CD8-positive, alpha-beta T cell (primary cell): ENCODE measurements at regions of chr5 and their contacts with region 1.

Region 1: GRCh38 chr5:81301271-81302015 is at the start of gene ZCCHC9:
- DNase-seq: peak; percentile 85 to 98 (median 94)
- ATAC-seq: peak; percentile 87
- H3K4me3 ChIP-seq: peak within 1 kb of the TSS; percentile 75 to 91
- H3K4me3 Mint-ChIP-seq: peak within 1 kb of the TSS; percentile 93
- H3K27ac ChIP-seq: peak within 1 kb of the TSS; percentile 79 to 87
- H3K27ac Mint-ChIP-seq: peak within 1 kb of the TSS; percentile 97
- H3K4me1 ChIP-seq: peaks cover 31% of the 10 kb centered on the region
- H3K4me1 Mint-ChIP-seq: peaks cover 60% of the 10 kb centered on the region
- H3K27me3 ChIP-seq: no peaks in the 10 kb centered on the region
- H3K27me3 Mint-ChIP-seq: no peaks in the 10 kb centered on the region
- CTCF ChIP-seq: no peak
- total RNA-seq, gene ZCCHC9: 14.6 to 15.3 TPM

Region 2: GRCh38 chr5:79612667-79613198 is 1688.7 kb before region 1 on chr5:
- CTCF ChIA-PET with region 1: no interaction called
- POLR2A ChIA-PET with region 1: no interaction called
- intact Hi-C with region 1: loop called in 1 of 2 experiments (anchors 5 kb)
- DNase-seq: no peak
- ATAC-seq: no peak
- H3K4me3 ChIP-seq: peak overlapping the region; percentile 71 to 97
- H3K4me3 Mint-ChIP-seq: peak overlapping the region; percentile 96
- H3K27ac ChIP-seq: peak overlapping the region; percentile 89 to 91
- H3K27ac Mint-ChIP-seq: peak overlapping the region; percentile 98
- H3K4me1 ChIP-seq: peaks cover 26% of the 10 kb centered on the region
- H3K4me1 Mint-ChIP-seq: peaks cover 39% of the 10 kb centered on the region
- H3K27me3 ChIP-seq: no peaks in the 10 kb centered on the region
- H3K27me3 Mint-ChIP-seq: peaks cover 9% of the 10 kb centered on the region
- CTCF ChIP-seq: no peak

Region 3: GRCh38 chr5:80679650-80680049 is 621.8 kb before region 1 on chr5:
- CTCF ChIA-PET with region 1: no interaction called
- POLR2A ChIA-PET with region 1: no interaction called
- intact Hi-C with region 1: loop called in 1 of 2 experiments (anchors 5 kb)
- DNase-seq: no peak
- ATAC-seq: no peak
- H3K4me3 ChIP-seq: no peak overlapping the region
- H3K4me3 Mint-ChIP-seq: no peak overlapping the region
- H3K27ac ChIP-seq: no peak overlapping the region
- H3K27ac Mint-ChIP-seq: no peak overlapping the region
- H3K4me1 ChIP-seq: no peaks in the 10 kb centered on the region
- H3K4me1 Mint-ChIP-seq: peaks cover 2% of the 10 kb centered on the region
- H3K27me3 ChIP-seq: no peaks in the 10 kb centered on the region
- H3K27me3 Mint-ChIP-seq: no peaks in the 10 kb centered on the region
- CTCF ChIP-seq: no peak

Region 4: GRCh38 chr5:81288021-81288433 is 13.4 kb before region 1 on chr5:
- CTCF ChIA-PET with region 1: interaction called, 11 read pairs
- POLR2A ChIA-PET with region 1: interaction called, 6 read pairs
- intact Hi-C with region 1: no loop called
- DNase-seq: no peak
- ATAC-seq: no peak
- H3K4me3 ChIP-seq: no peak overlapping the region
- H3K4me3 Mint-ChIP-seq: no peak overlapping the region
- H3K27ac ChIP-seq: no peak overlapping the region
- H3K27ac Mint-ChIP-seq: no peak overlapping the region
- H3K4me1 ChIP-seq: peaks cover 7% of the 10 kb centered on the region
- H3K4me1 Mint-ChIP-seq: peaks cover 57% of the 10 kb centered on the region
- H3K27me3 ChIP-seq: no peaks in the 10 kb centered on the region
- H3K27me3 Mint-ChIP-seq: no peaks in the 10 kb centered on the region
- CTCF ChIP-seq: no peak

Region 5: DNA sequence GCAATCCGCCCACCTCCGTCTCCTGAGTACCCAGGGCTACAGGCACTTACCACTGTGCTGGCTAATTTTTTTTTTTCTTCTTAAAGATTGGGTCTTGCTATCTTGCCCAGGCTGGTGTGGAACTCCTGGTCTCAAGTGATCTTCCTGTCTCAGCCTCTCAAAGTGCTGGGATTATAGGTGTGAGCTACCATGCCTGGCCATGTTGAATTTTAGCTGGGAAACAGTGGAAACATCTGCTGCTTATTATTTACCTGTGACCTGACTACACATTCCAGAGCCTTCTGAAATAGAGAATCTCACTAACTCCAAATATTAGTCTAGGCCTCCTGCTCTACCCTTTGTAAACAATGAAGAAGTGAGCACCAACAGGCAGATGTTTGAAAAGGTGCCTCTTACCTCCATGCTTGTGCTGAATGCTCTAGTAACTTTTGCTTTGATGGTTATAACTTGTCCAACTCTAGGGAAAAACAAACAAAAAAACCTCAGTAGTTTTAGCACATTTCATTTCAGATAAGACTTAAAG is 70.0 kb after region 1 on chr5:
- CTCF ChIA-PET with region 1: no interaction called
- POLR2A ChIA-PET with region 1: no interaction called
- intact Hi-C with region 1: no loop called
- DNase-seq: no peak
- ATAC-seq: no peak
- H3K4me3 ChIP-seq: no peak overlapping the region
- H3K4me3 Mint-ChIP-seq: no peak overlapping the region
- H3K27ac ChIP-seq: no peak overlapping the region
- H3K27ac Mint-ChIP-seq: no peak overlapping the region
- H3K4me1 ChIP-seq: no peaks in the 10 kb centered on the region
- H3K4me1 Mint-ChIP-seq: no peaks in the 10 kb centered on the region
- H3K27me3 ChIP-seq: no peaks in the 10 kb centered on the region
- H3K27me3 Mint-ChIP-seq: peaks cover 10% of the 10 kb centered on the region
- CTCF ChIP-seq: no peak

Region 6: GRCh38 chr5:81971712-81972495 is 670.5 kb after region 1 on chr5 and contains the start of gene ATG10:
- CTCF ChIA-PET with region 1: no interaction called
- POLR2A ChIA-PET with region 1: no interaction called
- intact Hi-C with region 1: loop called in 1 of 2 experiments (anchors 5 kb)
- DNase-seq: peak; percentile 75 to 95 (median 86)
- ATAC-seq: peak; percentile 85
- H3K4me3 ChIP-seq: peak within 1 kb of the TSS; percentile 85 to 99
- H3K4me3 Mint-ChIP-seq: peak within 1 kb of the TSS; percentile 100
- H3K27ac ChIP-seq: peak within 1 kb of the TSS; percentile 96 to 97
- H3K27ac Mint-ChIP-seq: peak within 1 kb of the TSS; percentile 100
- H3K4me1 ChIP-seq: peaks cover 12% of the 10 kb centered on the region
- H3K4me1 Mint-ChIP-seq: peaks cover 31% of the 10 kb centered on the region
- H3K27me3 ChIP-seq: no peaks in the 10 kb centered on the region
- H3K27me3 Mint-ChIP-seq: no peaks in the 10 kb centered on the region
- CTCF ChIP-seq: no peak
- total RNA-seq, gene ATG10: 4.7 to 5.7 TPM

Region 7: DNA sequence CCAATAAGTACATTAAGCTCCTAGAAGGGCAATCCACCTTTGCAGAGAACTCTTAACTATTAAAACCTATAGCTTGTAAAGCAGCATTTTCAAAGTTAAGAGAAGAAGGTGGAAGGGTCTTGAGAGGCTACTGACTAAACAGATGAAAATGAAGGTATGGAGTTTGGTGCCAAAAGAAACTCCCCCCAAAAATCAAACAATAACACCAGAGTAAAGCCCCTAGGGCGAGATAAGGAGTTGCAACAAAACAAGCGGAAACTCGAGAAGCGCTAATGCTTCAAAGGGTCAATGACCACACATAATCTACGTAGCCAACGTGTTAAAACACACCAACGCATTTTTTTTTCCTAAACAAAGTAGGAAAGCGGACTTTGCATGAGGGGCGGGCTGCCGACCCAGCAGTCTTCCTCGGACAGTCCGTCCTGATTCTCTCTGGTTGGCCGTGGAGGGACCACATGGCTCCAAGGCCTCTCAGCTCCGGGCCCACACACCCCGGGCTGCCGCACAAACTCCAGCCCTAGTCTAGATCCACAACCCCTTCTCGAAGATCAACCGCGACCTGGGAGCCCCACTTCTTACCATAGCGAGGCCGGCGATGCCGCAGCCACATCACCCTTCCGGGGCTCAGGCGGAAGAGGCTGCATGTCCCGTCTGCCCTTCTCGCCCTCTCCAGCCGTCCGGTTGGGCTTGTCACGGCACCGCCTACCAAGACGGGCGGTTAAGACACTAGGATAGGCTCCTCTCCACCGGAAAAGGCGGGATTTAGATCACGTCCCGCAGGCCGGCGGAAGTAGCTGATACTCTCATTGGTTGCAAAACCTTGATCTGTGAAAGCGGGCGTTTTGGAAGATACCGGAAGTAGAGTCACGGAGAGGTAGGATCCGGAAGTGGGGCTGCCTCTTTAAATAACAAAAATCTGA is 1775.6 kb after region 1 on chr5 and contains the starts of genes TMEM167A and XRCC4:
- CTCF ChIA-PET with region 1: interaction called, 3 read pairs
- POLR2A ChIA-PET with region 1: no interaction called
- intact Hi-C with region 1: loop called in 1 of 2 experiments (anchors 5 kb)
- DNase-seq: peak; percentile 84 to 98 (median 92)
- ATAC-seq: peak; percentile 98
- H3K4me3 ChIP-seq: peak within 1 kb of the TSS; percentile 81 to 93
- H3K4me3 Mint-ChIP-seq: peak within 1 kb of the TSS; percentile 99
- H3K27ac ChIP-seq: peak within 1 kb of the TSS; percentile 77 to 96
- H3K27ac Mint-ChIP-seq: peak within 1 kb of the TSS; percentile 99
- H3K4me1 ChIP-seq: peaks cover 28% of the 10 kb centered on the region
- H3K4me1 Mint-ChIP-seq: peaks cover 59% of the 10 kb centered on the region
- H3K27me3 ChIP-seq: no peaks in the 10 kb centered on the region
- H3K27me3 Mint-ChIP-seq: no peaks in the 10 kb centered on the region
- CTCF ChIP-seq: no peak
- total RNA-seq, gene TMEM167A: 51.6 to 59.0 TPM
- total RNA-seq, gene XRCC4: 1.1 to 1.3 TPM